ENCODE measurements at regions of chr14 and their contacts with region 1.

Region 1: GRCh38 chr14:52068615-52069303 is at the start of gene NID2:
- DNase-seq: peak; percentile 93
- ATAC-seq: peak; percentile 94
- total RNA-seq, gene NID2: 39.5 TPM

Region 2: GRCh38 chr14:51996148-51996746 is 72.5 kb before region 1 on chr14:
- intact Hi-C with region 1: loop called (anchors 5 kb)
- DNase-seq: no peak
- ATAC-seq: peak; percentile 64

Region 3: GRCh38 chr14:52013984-52014600 is 54.7 kb before region 1 on chr14:
- intact Hi-C with region 1: loop called (anchors 5 kb)
- DNase-seq: peak; percentile 53
- ATAC-seq: peak; percentile 38

Region 4: GRCh38 chr14:52360831-52361230 is 292.1 kb after region 1 on chr14:
- intact Hi-C with region 1: no loop called
- DNase-seq: no peak
- ATAC-seq: peak; percentile 51

Measured in Right ventricle myocardium superior (tissue), 1 donor.